ENCODE measurements at regions of chr2 and their contacts with region 1.

Region 1: DNA sequence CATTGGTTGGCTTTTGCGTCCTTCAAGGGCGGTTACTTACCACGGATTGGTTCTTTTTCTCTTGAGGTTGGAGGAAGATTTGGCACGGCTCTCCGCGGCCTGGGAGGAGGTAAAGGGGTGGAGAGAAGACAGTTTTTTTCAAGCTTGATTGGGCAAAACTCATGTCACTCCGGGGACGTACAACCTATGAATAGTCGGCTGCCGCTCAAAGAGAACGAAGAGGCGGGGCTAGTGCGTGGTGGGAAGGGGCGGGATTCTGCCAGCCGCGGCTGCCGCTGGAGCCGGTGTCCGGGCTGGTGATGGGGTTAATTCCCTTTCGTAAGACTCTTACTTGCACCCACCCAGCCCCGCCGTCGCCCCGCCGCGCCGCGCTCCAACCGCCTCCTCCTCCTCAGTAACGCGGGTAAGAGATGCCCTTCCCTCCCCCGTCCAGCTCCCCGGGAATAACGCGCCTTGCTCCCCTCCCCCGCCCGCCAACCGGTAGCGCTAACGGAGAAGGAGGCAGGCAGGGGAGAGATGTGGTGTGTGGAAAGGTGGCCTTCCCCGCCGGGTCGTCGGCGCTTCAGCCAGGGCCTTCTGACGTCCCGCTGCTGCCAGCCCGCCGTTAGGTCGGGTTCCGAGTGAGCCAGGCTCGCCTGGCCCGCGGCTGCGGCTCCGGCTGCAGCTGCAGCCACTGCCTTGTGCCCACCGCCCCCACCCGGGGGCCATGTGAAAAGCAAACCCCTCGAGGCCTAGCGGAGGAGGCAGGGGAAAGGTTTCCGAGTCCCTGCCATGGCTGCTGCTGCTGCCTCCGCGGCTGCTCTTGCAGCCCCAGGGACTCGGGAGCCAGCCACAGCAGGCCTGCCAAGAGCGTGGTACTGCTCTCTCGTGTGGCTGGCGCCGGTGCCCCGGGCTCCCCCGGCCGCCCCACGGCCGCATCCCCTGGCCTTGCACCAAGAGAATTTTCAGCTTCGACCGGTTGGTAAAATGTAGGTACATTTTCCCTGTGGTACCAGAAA is at the start of gene R3HDM1:
- DNase-seq: peak; percentile 100
- H3K4me3 ChIP-seq: peak within 1 kb of the TSS; percentile 87
- H3K27ac ChIP-seq: peak within 1 kb of the TSS; percentile 85
- H3K4me1 ChIP-seq: peaks cover 41% of the 10 kb centered on the region
- CTCF ChIP-seq: peak; percentile 53
- total RNA-seq, gene R3HDM1: 28.7 and 67.5 TPM in 2 replicates

Region 2: DNA sequence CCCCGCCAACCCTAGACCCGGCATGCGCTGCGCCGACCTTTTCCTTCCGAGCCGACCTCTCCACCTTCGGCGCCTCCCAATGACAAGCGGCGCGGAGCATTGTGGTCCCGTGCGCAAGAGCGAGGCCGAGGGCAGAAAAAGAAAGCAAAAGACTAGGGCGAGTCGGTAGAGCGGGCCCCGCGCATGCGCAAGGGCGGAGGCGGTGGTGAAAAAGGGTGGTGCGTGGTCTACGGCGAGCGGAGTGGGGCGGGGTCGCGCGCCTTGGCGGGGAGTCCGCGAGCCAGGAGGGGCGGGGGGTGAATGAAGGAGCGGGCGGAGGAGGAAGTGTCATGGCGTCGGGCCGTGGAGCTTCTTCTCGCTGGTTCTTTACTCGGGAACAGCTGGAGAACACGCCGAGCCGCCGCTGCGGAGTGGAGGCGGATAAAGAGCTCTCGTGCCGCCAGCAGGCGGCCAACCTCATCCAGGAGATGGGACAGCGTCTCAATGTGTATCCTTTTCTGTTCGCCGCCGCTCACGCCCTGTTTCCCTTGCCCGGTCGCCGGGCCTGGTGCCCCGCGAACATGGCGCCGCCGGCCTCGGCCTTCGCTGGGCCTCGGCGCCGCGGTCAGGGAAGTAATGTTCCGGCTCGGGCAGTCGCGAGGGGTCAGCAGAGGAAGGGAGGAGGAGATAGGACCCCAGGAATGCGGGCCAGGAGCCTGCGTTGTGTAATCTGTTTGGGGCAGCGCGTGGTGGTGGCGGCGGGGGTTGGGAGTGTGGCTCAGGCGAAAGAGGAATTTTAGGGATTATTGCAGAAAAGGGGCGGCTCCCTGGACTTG is 612.8 kb before region 1 on chr2 and contains the start of gene CCNT2:
- CTCF ChIA-PET with region 1: no interaction called
- POLR2A ChIA-PET with region 1: no interaction called
- intact Hi-C with region 1: loop called (anchors 2 kb)
- DNase-seq: peak; percentile 99
- H3K4me3 ChIP-seq: peak within 1 kb of the TSS; percentile 93
- H3K27ac ChIP-seq: peak within 1 kb of the TSS; percentile 90
- H3K4me1 ChIP-seq: peaks cover 23% of the 10 kb centered on the region
- CTCF ChIP-seq: no peak
- total RNA-seq, gene CCNT2: 17.7 and 32.8 TPM in 2 replicates

Region 3: DNA sequence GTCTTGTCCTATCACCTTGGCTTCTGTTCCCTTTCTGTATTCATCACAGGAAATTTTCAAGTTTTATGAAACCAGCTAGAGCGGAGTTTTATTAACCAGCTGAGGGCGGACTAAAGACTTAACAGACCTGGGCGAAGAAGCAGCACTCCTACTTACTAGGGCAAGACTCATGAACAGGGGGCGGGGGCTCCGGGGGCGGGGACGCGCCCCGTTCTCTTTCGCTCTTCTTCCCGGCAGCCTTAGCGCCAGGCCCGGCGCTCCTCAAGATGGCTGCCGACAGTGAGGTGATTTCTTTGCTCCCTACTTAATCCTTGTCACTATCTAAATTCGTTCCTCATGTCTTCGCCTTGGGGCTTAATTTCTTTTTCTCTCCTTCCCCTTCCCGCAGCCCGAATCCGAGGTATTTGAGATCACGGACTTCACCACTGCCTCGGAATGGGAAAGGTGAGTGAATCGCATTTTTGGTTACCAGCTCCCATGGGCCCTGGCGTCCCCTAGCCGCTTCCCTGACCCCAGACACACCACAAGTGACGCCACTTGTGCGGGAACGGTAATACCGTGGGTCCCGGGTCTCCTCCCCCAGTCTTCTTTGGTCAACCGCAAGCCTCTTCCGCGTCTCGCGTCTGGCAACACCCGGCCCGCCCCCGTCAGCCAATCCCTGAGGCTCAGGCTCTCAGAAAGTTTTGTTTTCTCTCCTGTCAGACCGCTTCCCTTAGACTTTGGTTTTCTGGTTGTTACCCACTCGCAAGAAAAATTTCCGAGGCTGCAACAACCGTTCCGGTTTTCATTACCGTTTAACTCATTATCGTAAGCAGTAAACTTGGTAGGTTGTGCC is 479.3 kb before region 1 on chr2 and contains the start of gene RAB3GAP1:
- CTCF ChIA-PET with region 1: no interaction called
- POLR2A ChIA-PET with region 1: interaction called, 4 read pairs
- intact Hi-C with region 1: loop called (anchors 1 kb)
- DNase-seq: peak; percentile 86
- H3K4me3 ChIP-seq: peak within 1 kb of the TSS; percentile 92
- H3K27ac ChIP-seq: peak within 1 kb of the TSS; percentile 89
- H3K4me1 ChIP-seq: peaks cover 37% of the 10 kb centered on the region
- CTCF ChIP-seq: no peak; the same call in 1 of the 2 replicates
- total RNA-seq, gene RAB3GAP1: 40.2 and 49.2 TPM in 2 replicates

Region 4: GRCh38 chr2:135258193-135258592 is 273.3 kb before region 1 on chr2:
- CTCF ChIA-PET with region 1: no interaction called
- POLR2A ChIA-PET with region 1: no interaction called
- intact Hi-C with region 1: loop called (anchors 2 kb)
- DNase-seq: peak; percentile 44
- H3K4me3 ChIP-seq: no peak overlapping the region
- H3K27ac ChIP-seq: no peak overlapping the region
- H3K4me1 ChIP-seq: peaks cover 41% of the 10 kb centered on the region
- CTCF ChIP-seq: peak; percentile 60

Region 5: GRCh38 chr2:135271006-135271405 is 260.5 kb before region 1 on chr2:
- CTCF ChIA-PET with region 1: no interaction called
- POLR2A ChIA-PET with region 1: no interaction called
- intact Hi-C with region 1: no loop called
- DNase-seq: no peak
- H3K4me3 ChIP-seq: no peak overlapping the region
- H3K27ac ChIP-seq: no peak overlapping the region
- H3K4me1 ChIP-seq: no peaks in the 10 kb centered on the region
- CTCF ChIP-seq: no peak

Region 6: GRCh38 chr2:135590619-135591260 is 59.2 kb after region 1 on chr2:
- CTCF ChIA-PET with region 1: interaction called, 4 read pairs
- POLR2A ChIA-PET with region 1: interaction called, 10 read pairs
- intact Hi-C with region 1: loop called (anchors 2 kb)
- DNase-seq: peak; percentile 69
- H3K4me3 ChIP-seq: no peak overlapping the region
- H3K27ac ChIP-seq: peak overlapping the region; percentile 82
- H3K4me1 ChIP-seq: peaks cover 52% of the 10 kb centered on the region
- CTCF ChIP-seq: no peak

Region 7: GRCh38 chr2:135709992-135710391 is 178.5 kb after region 1 on chr2:
- CTCF ChIA-PET with region 1: no interaction called
- POLR2A ChIA-PET with region 1: no interaction called
- intact Hi-C with region 1: loop called (anchors 2 kb)
- DNase-seq: peak; percentile 61
- H3K4me3 ChIP-seq: no peak overlapping the region
- H3K27ac ChIP-seq: no peak overlapping the region
- H3K4me1 ChIP-seq: no peaks in the 10 kb centered on the region
- CTCF ChIP-seq: peak; percentile 99

Region 8: GRCh38 chr2:135882415-135882814 is 350.9 kb after region 1 on chr2:
- CTCF ChIA-PET with region 1: no interaction called
- POLR2A ChIA-PET with region 1: no interaction called
- intact Hi-C with region 1: no loop called
- DNase-seq: no peak
- H3K4me3 ChIP-seq: no peak overlapping the region
- H3K27ac ChIP-seq: no peak overlapping the region
- H3K4me1 ChIP-seq: no peaks in the 10 kb centered on the region
- CTCF ChIP-seq: no peak

Measured in OCI-LY7 (cell line).